H1 (cell line): ENCODE measurements at regions of chr12 and their contacts with region 1.

Region 1: DNA sequence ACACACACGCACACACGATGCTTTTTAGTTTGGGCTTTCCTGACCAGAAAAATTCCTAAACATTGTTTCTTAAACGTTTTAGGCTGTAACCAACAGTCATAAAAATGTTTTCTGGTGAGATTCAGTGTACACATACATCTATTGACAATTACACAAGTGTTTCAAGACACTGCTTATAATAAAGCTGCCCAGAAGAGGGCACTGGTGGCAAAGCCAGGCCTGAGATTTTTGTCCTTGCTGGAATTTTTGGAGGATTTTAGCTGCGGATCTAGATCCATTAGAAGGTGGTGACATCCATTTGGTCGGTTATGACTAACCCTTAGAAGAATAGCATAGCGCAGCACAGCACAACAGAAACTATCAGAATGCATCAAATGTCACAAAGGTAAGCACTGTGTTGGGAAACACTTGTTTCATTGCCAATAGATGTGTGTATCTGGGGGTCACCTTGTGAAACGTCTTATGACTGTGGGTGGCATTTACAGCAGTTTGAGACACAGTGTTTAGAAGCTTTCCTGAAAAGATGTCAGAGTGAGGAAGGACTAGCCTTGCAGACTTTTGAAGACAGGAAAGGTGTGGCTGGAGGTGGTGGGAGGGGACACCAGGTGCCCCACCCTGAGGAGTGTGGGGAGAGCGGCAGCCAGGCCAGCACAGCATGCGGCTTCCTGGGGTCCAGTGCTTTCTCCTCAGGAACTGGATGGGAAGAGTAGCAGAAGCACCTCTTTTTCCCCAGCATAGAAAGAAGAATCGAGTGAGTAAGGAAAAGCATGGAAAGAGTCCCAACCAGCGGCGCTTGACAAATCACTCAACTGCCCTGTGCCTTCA is 54.7 kb upstream of the FKBP4 start:
- DNase-seq: no peak
- H3K4me3 ChIP-seq: no peak overlapping the region
- H3K27ac ChIP-seq: no peak overlapping the region
- H3K4me1 ChIP-seq: peaks cover 0 to 3% (median 0%) of the 10 kb centered on the region in 4 experiments; a peak in 3 of 7 replicates
- H3K27me3 ChIP-seq: peaks cover 0 to 3% (median 0%) of the 10 kb centered on the region in 4 experiments; a peak in 1 of 7 replicates
- CTCF ChIP-seq: peak in 2 of 3 experiments; percentile 71 to 83; a peak in 3 of 4 replicates
- EP300 ChIP-seq: no peak
- POLR2A ChIP-seq: no peak
- RAD21 ChIP-seq: peak; percentile 86 to 93

Region 2: DNA sequence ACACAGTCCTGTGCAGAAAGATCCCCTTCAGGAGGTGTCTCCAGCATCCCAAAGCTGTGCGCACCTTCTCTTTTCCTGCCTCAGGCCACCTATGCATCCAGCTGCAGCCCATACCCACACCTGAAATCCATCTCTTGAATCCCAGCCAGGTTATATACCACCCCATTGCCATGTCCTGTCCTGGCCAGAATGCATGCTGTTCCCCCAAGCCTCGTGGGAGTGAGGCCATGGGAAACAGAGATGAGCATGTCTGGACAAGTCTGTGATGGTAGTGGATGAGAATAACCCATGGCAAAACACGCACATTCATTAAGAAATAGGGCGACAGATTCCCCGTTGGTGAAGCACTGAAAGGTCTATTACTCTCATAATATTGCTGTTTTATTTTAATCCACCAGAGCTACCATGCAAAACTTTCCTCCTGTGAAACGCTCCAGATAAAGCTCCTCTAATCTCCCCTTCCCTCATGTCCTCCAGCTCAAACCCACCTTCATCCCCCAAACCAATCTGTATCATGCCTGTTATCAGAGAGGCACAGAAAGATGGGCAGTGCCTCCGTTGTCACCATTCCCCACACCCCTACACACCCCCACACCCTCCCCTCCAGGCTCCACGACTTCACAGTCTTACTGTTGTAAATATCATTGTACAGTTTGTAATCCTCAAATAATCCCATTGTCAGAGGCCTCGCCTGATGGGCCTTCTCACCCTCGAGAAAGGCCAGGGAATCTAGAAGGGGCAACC is 42.8 kb before region 1 on chr12:
- CTCF ChIA-PET with region 1: no interaction called
- POLR2A ChIA-PET with region 1: no interaction called
- DNase-seq: no peak
- H3K4me3 ChIP-seq: no peak overlapping the region
- H3K27ac ChIP-seq: no peak overlapping the region
- H3K4me1 ChIP-seq: peaks cover 0 to 6% (median 2%) of the 10 kb centered on the region in 4 experiments; a peak in 3 of 7 replicates
- H3K27me3 ChIP-seq: peaks cover 0 to 3% (median 0%) of the 10 kb centered on the region in 4 experiments; a peak in 1 of 7 replicates
- CTCF ChIP-seq: no peak
- EP300 ChIP-seq: no peak
- POLR2A ChIP-seq: no peak
- RAD21 ChIP-seq: no peak

Region 3: GRCh38 chr12:2752676-2753371 is 12.8 kb after region 1 on chr12:
- CTCF ChIA-PET with region 1: interaction called, 66 read pairs
- POLR2A ChIA-PET with region 1: interaction called, 8 read pairs
- DNase-seq: peak; percentile 74 to 97
- H3K4me3 ChIP-seq: peak overlapping the region in 3 of 4 experiments; percentile 5 to 45 (median 14); a peak in 5 of 8 replicates
- H3K27ac ChIP-seq: no peak overlapping the region
- H3K4me1 ChIP-seq: peaks cover 6 to 18% (median 15%) of the 10 kb centered on the region in 4 experiments
- H3K27me3 ChIP-seq: peaks cover 0 to 9% (median 8%) of the 10 kb centered on the region in 4 experiments; a peak in 4 of 7 replicates
- CTCF ChIP-seq: peak in 2 of 3 experiments; percentile 1 to 25; a peak in 2 of 4 replicates
- EP300 ChIP-seq: peak in 1 of 2 experiments; percentile 68; a peak in 1 of 3 replicates
- POLR2A ChIP-seq: no peak
- RAD21 ChIP-seq: peak; percentile 20 to 42; a peak in 2 of 4 replicates

Region 4: GRCh38 chr12:2773199-2773875 is 33.3 kb after region 1 on chr12:
- CTCF ChIA-PET with region 1: interaction called, 11 read pairs
- POLR2A ChIA-PET with region 1: interaction called, 4 read pairs
- DNase-seq: no peak
- H3K4me3 ChIP-seq: no peak overlapping the region
- H3K27ac ChIP-seq: no peak overlapping the region
- H3K4me1 ChIP-seq: peaks cover 0 to 2% (median 0%) of the 10 kb centered on the region in 4 experiments; a peak in 1 of 7 replicates
- H3K27me3 ChIP-seq: no peaks in the 10 kb centered on the region
- CTCF ChIP-seq: no peak
- EP300 ChIP-seq: no peak
- POLR2A ChIP-seq: no peak
- RAD21 ChIP-seq: no peak

Region 5: GRCh38 chr12:2794736-2795289 is 54.8 kb after region 1 on chr12 and contains the start of gene FKBP4:
- CTCF ChIA-PET with region 1: interaction called, 22 read pairs
- POLR2A ChIA-PET with region 1: interaction called, 5 read pairs
- DNase-seq: peak; percentile 63 to 89
- H3K4me3 ChIP-seq: peak within 1 kb of the TSS; percentile 59 to 73 (median 66)
- H3K27ac ChIP-seq: no peak within 1 kb of the TSS
- H3K4me1 ChIP-seq: peaks cover 4 to 6% (median 5%) of the 10 kb centered on the region in 4 experiments; a peak in 5 of 7 replicates
- H3K27me3 ChIP-seq: peaks cover 0 to 6% (median 4%) of the 10 kb centered on the region in 4 experiments; a peak in 6 of 7 replicates
- CTCF ChIP-seq: no peak
- EP300 ChIP-seq: 0 out of 3 replicates have a peak, but pooled peaks of 1 of the 2 experiments have one; percentile 18
- POLR2A ChIP-seq: peak; percentile 38 to 73
- RAD21 ChIP-seq: no peak
- total RNA-seq, gene FKBP4: 227 and 243 TPM in 2 replicates